Esophagus muscularis mucosa (tissue), 4 donors: ENCODE measurements at regions of chr17 and their contacts with region 1.

Region 1: DNA sequence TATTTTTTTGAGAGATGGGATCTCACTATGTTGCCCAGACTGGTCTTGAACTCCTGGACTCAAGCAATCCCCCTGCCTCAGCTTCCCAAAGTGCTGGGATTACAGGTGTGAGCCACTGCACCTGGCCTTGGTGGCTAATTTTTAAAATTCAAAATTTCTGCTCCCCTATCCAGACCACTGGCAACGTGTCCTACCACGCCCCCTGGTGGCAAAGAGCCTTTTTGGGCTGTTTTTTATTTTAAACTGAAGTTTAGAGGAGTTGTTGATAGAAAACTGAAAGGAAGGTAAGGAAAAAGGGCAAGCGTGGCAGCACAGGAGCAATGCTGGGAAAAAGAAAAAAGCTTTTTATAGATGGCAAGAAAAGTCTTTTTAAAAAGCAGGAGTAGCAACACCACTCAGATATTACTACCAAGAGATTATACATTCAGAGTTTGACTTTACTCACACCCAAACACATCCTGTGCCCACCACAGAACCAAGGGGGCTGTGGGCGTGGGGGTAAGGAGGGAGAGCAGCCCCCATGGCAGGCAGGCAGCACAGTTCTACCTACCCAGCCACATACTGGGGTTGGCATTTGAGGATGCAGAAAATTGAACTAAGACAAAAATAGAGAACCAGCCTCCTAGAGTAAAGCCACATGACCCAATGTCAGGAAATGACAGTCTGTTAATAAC is 4.2 kb upstream of the MXRA7 start:
- DNase-seq: no peak
- H3K4me3 ChIP-seq: no peak overlapping the region
- H3K27ac ChIP-seq: peak overlapping the region; percentile 52 to 74 (median 68)
- H3K4me1 ChIP-seq: peaks cover 49 to 67% (median 52%) of the 10 kb centered on the region in 4 donors
- H3K27me3 ChIP-seq: no peaks in the 10 kb centered on the region
- CTCF ChIP-seq: peak; percentile 87 to 91 (median 89)
- EP300 ChIP-seq: no peak
- POLR2A ChIP-seq: no peak

Region 2: GRCh38 chr17:76557368-76558197 is 157.4 kb before region 1 on chr17:
- intact Hi-C with region 1: loop called (anchors 10 kb)
- DNase-seq: peak; percentile 98
- H3K4me3 ChIP-seq: peak overlapping the region; percentile 64 to 75 (median 71)
- H3K27ac ChIP-seq: peak overlapping the region; percentile 83 to 93 (median 86)
- H3K4me1 ChIP-seq: peaks cover 53 to 61% (median 56%) of the 10 kb centered on the region in 4 donors
- H3K27me3 ChIP-seq: no peaks in the 10 kb centered on the region
- CTCF ChIP-seq: peak; percentile 37 to 66 (median 64)
- EP300 ChIP-seq: no peak
- POLR2A ChIP-seq: peak; percentile 68

Region 3: DNA sequence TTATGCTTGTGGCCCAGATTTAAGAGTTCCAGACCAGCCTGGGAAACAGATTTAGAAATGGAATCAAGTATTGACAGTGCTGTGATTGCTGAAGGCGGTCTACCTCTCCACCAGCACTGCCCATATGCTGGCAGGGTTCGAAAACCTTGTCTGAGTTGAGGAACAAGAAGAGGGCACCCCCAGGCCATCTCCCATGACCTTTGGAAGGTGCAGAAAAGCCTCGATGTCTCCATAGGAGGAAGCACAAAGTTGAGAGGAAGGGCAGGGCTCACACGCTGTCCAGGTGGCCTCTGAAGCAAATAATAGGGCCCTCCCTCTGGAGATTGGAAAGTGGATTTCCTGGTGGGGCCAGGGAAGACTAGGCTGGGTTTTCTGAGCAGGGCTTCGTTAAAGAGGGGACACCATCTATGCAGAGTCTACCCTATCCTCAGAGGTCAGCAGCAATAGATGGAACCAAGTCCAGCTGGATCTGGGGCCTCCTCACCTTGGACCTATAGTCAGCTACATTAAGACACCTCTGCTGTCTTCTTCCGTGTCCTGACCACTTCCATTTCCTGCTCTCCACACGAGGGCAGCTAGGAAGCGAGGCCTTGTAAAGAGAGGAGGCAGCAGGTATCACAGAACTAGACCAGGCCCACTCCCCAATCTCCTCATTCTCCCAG is 56.8 kb before region 1 on chr17:
- intact Hi-C with region 1: no loop called
- DNase-seq: no peak
- H3K4me3 ChIP-seq: no peak overlapping the region
- H3K27ac ChIP-seq: no peak overlapping the region
- H3K4me1 ChIP-seq: peaks cover 0 to 19% (median 9%) of the 10 kb centered on the region in 4 donors
- H3K27me3 ChIP-seq: peaks cover 0 to 5% (median 0%) of the 10 kb centered on the region in 4 donors
- CTCF ChIP-seq: no peak
- EP300 ChIP-seq: no peak
- POLR2A ChIP-seq: no peak

Region 4: DNA sequence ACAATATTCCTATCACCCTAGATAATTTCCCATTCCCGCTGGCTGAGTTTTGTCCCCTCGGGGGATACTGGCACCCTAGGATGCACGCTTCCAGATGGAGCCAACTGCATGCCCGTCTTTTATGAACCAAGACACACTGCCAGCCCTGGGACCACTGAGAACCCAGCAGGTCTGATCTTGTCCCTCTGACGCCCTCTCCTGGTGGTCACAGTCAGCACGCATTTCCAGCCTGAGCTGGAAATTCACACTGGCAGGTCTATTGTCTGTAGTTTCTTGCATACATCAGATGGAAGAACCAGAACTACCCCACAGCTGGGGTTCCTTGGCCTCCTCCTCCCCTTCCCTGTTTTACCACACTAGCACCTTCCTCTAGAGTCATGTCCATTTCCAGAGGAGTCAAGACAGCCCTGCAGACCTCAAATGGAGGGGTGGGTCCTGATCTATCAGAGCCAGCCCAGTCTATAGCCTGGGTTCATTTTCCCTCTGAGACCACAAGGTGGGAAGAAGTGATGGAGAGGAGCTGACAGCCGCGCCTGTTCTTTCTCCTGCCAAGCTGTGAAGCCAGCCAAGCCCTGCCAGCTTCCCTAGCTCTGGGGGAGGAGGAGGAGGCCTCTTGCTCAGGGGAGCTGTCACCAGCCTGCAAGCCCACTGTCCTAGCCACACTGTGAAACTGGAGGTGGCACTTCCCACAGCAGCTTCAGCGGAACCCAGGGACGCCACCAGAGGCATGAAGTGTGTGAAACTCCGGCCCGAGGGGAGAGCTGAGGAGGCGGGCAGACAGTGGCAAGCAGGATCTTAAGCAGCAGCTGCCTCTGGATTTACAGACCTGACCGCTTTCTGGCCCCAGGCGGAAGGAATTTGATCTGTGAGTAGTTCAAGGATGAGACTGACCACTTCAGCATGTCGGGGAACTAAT is 33.5 kb before region 1 on chr17:
- intact Hi-C with region 1: loop called (anchors 5 kb)
- DNase-seq: no peak
- H3K4me3 ChIP-seq: no peak overlapping the region
- H3K27ac ChIP-seq: peak overlapping the region; percentile 89 to 96 (median 92)
- H3K4me1 ChIP-seq: peaks cover 56 to 59% (median 58%) of the 10 kb centered on the region in 4 donors
- H3K27me3 ChIP-seq: no peaks in the 10 kb centered on the region
- CTCF ChIP-seq: peak; percentile 64 to 78 (median 74)
- EP300 ChIP-seq: no peak
- POLR2A ChIP-seq: no peak

Region 5: GRCh38 chr17:76868176-76868668 is 153.3 kb after region 1 on chr17 and contains the start of gene MGAT5B:
- intact Hi-C with region 1: no loop called
- DNase-seq: no peak
- H3K4me3 ChIP-seq: peak within 1 kb of the TSS; percentile 44 to 63 (median 48)
- H3K27ac ChIP-seq: no peak within 1 kb of the TSS
- H3K4me1 ChIP-seq: peaks cover 12 to 30% (median 26%) of the 10 kb centered on the region in 4 donors
- H3K27me3 ChIP-seq: peaks cover 5 to 88% (median 32%) of the 10 kb centered on the region in 4 donors
- CTCF ChIP-seq: peak; percentile 89 to 92 (median 90)
- EP300 ChIP-seq: no peak
- POLR2A ChIP-seq: no peak
- total RNA-seq, gene MGAT5B: under 0.01 to 1.7 (median 0.43) TPM

Region 6: DNA sequence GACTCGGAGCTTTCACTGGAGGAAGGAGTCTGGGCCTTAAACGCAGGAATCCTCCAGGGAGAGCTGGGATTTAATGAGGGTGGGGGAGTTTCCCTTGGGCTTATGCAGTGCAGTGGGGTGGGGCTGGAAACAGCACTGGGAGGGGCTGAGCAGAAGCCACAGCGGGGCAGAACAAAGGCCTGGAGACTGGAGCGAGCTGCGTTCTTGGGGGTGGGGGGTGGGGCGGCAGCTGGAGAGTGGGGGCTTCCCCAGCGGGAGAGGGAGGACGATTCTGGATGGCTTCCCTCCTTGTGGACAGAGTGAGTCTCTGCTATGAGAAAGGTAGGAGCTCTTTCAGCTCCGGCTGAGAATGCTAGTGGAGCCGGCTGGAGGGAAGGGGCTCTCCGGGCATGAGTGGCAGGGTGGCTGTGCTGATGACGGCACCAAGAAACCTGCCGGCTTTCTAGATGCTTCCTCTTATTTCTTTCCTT is 831.8 kb after region 1 on chr17:
- intact Hi-C with region 1: no loop called
- DNase-seq: no peak
- H3K4me3 ChIP-seq: peak overlapping the region; percentile 36 to 50 (median 42)
- H3K27ac ChIP-seq: peak overlapping the region; percentile 57 to 67 (median 64)
- H3K4me1 ChIP-seq: peaks cover 16 to 49% (median 44%) of the 10 kb centered on the region in 4 donors
- H3K27me3 ChIP-seq: no peaks in the 10 kb centered on the region
- CTCF ChIP-seq: peak in 1 of 3 experiments; percentile 6
- EP300 ChIP-seq: no peak
- POLR2A ChIP-seq: no peak